ENCODE measurements at regions of chr4 and their contacts with region 1.

Region 1: DNA sequence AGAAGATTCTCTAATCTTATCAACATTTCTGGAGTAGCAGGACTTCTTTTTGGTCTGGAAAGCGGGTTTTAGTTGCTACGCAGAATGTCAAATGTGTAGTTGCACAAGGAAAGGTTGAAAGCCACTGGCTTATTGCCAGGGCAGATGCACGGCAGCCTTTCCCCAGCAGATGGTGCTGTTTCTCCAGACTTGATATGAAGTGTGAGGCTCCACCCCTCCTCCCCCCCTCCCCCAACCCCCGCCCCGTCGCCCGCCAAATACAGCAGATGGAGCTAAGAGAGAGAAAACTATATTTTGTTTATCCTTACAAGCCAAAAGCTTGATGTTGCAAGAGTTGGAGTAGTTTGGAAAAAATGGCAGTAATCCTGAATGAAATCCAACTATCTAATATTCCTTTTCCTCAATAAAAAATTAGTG is 32.0 kb downstream of the ENOPH1 start:
- DNase-seq: peak; percentile 82 to 88
- H3K4me3 ChIP-seq: no peak overlapping the region
- H3K4me3 Mint-ChIP-seq: no peak overlapping the region
- H3K27ac Mint-ChIP-seq: no peak overlapping the region
- H3K4me1 ChIP-seq: peaks cover 5% of the 10 kb centered on the region
- H3K4me1 Mint-ChIP-seq: no peaks in the 10 kb centered on the region
- H3K27me3 ChIP-seq: no peaks in the 10 kb centered on the region
- H3K27me3 Mint-ChIP-seq: no peaks in the 10 kb centered on the region
- CTCF ChIP-seq: peak; percentile 72 to 87

Region 2: GRCh38 chr4:82561745-82562515 is 99.5 kb after region 1 on chr4 and contains the start of gene TMEM150C:
- CTCF ChIA-PET with region 1: no interaction called
- POLR2A ChIA-PET with region 1: no interaction called
- intact Hi-C with region 1: loop called (anchors 2 kb)
- DNase-seq: peak; percentile 43 to 69
- H3K4me3 ChIP-seq: peak within 1 kb of the TSS; percentile 56
- H3K4me3 Mint-ChIP-seq: peak within 1 kb of the TSS; percentile 81
- H3K27ac Mint-ChIP-seq: peak within 1 kb of the TSS; percentile 48
- H3K4me1 ChIP-seq: no peaks in the 10 kb centered on the region
- H3K4me1 Mint-ChIP-seq: peaks cover 12% of the 10 kb centered on the region
- H3K27me3 ChIP-seq: no peaks in the 10 kb centered on the region
- H3K27me3 Mint-ChIP-seq: no peaks in the 10 kb centered on the region
- CTCF ChIP-seq: no peak
- total RNA-seq, gene TMEM150C: 5.0 and 5.7 TPM in 2 replicates

Region 3: DNA sequence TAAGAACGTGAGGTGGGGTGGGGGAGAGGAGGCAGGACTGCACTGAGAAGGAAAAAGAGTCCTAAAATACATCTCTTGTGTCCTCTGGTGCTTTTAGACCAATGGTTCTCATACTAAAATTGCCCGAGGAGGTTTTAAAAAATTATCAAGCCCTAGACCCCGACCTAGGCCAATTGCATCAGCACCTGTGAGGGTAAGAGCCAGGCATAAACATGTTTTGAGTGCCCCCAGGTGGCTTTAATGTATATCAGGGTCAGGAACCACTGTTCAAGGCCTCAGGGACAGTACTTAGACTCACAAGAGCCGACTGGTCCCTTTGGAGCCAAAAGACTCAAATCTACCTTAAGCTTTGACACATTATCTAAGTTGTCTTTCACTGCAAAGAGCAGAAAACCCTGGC is 136.9 kb after region 1 on chr4:
- CTCF ChIA-PET with region 1: interaction called, 5 read pairs
- POLR2A ChIA-PET with region 1: no interaction called
- intact Hi-C with region 1: loop called (anchors 1 kb)
- DNase-seq: peak; percentile 55 to 57
- H3K4me3 ChIP-seq: no peak overlapping the region
- H3K4me3 Mint-ChIP-seq: no peak overlapping the region
- H3K27ac Mint-ChIP-seq: no peak overlapping the region
- H3K4me1 ChIP-seq: no peaks in the 10 kb centered on the region
- H3K4me1 Mint-ChIP-seq: no peaks in the 10 kb centered on the region
- H3K27me3 ChIP-seq: no peaks in the 10 kb centered on the region
- H3K27me3 Mint-ChIP-seq: no peaks in the 10 kb centered on the region
- CTCF ChIP-seq: peak in 1 of 2 experiments; percentile 30

Region 4: GRCh38 chr4:82710202-82710929 is 247.9 kb after region 1 on chr4:
- CTCF ChIA-PET with region 1: interaction called, 4 read pairs
- POLR2A ChIA-PET with region 1: no interaction called
- intact Hi-C with region 1: loop called (anchors 5 kb)
- DNase-seq: no peak
- H3K4me3 ChIP-seq: no peak overlapping the region
- H3K4me3 Mint-ChIP-seq: no peak overlapping the region
- H3K27ac Mint-ChIP-seq: no peak overlapping the region
- H3K4me1 ChIP-seq: no peaks in the 10 kb centered on the region
- H3K4me1 Mint-ChIP-seq: no peaks in the 10 kb centered on the region
- H3K27me3 ChIP-seq: no peaks in the 10 kb centered on the region
- H3K27me3 Mint-ChIP-seq: no peaks in the 10 kb centered on the region
- CTCF ChIP-seq: no peak

Region 5: DNA sequence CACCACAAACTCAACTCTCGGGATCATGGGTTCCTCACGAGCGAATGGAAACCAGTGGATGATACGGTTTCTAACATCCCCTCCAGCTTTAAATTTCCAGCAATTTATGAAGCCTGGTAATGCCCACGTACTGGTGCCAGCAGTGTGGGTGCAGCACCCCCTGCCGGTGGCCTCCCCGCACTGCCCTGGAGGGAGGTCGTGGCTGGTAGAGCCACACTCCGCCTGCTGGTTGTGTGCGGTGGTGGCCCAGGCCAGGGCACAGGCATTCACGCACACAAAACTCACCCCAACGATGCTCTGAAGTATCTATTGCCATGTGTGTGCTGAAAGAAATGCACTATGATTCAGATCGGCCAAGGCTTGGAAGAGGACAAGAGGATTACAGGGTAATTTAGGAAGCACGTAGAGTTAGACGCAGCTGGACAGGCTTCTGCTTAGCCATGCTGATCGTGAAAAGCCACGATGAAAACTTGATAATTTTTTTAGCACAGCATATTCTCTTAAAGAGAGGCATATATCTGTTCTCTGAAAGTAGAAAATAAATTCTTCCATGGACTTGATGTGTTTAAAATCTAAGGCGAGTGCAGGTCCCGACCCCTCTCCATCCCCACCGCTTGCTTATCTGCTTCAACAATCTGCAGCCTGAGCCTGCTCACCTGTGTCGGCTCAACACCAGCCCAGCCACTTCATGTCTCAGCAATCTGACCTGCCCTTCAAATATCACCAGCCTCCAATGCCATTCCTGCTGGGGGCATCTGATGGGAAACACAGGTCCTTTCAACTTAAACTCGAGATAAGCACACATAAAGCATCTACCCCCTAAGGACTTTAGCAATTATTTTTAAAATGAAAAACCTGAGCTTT is 277.1 kb after region 1 on chr4:
- CTCF ChIA-PET with region 1: interaction called, 9 read pairs
- POLR2A ChIA-PET with region 1: no interaction called
- intact Hi-C with region 1: loop called (anchors 1 kb)
- DNase-seq: peak in 1 of 2 experiments; percentile 75
- H3K4me3 ChIP-seq: no peak overlapping the region
- H3K4me3 Mint-ChIP-seq: no peak overlapping the region
- H3K27ac Mint-ChIP-seq: no peak overlapping the region
- H3K4me1 ChIP-seq: no peaks in the 10 kb centered on the region
- H3K4me1 Mint-ChIP-seq: no peaks in the 10 kb centered on the region
- H3K27me3 ChIP-seq: no peaks in the 10 kb centered on the region
- H3K27me3 Mint-ChIP-seq: no peaks in the 10 kb centered on the region
- CTCF ChIP-seq: peak; percentile 71 to 80

Region 6: DNA sequence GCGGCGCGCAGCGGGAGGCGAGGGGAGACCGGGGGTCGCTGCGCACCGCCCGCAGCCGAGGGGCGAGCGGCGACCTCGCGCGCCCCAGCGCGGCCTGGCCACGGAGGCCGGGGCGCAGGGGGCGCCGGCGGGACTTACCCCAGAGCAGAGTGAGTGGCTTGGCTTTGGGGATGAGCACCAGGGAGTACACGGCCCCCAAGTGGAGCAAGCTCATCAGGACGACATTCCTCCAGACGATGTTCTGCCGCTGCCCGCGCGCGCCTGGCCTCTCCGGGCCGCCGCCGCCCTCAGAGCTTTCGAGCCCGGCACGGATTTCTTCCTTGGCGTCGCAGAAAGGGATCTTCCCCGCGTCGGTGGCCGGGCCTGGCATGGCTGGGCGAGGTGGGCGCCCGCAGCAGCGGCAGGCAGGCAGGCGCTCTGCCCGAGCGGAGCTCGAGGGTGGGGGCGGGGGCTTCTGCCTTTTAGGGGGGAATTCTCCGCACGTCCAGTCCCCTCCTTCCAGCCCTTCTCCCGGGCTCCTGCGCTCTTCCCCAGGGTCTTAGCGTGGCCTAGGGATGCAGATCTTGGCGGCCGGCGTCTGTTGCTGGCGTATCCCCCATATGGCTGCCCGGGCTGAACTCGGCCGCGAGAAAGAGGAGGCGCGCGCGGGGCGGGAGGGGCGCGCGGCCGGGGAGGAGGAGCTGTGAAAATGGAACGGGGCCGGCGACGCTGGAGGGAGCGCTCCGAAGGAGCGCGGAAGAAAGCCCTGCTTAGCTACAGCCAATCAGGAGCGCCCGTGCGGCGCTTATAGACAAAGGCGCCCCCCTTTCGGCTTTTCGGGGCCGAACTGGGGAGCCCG is 336.0 kb after region 1 on chr4 and contains the start of gene SCD5:
- CTCF ChIA-PET with region 1: interaction called, 3 read pairs
- POLR2A ChIA-PET with region 1: no interaction called
- intact Hi-C with region 1: loop called (anchors 5 kb)
- DNase-seq: peak; percentile 42 to 51
- H3K4me3 ChIP-seq: peak within 1 kb of the TSS; percentile 64
- H3K4me3 Mint-ChIP-seq: peak within 1 kb of the TSS; percentile 74
- H3K27ac Mint-ChIP-seq: no peak within 1 kb of the TSS
- H3K4me1 ChIP-seq: no peaks in the 10 kb centered on the region
- H3K4me1 Mint-ChIP-seq: no peaks in the 10 kb centered on the region
- H3K27me3 ChIP-seq: no peaks in the 10 kb centered on the region
- H3K27me3 Mint-ChIP-seq: peaks cover 5% of the 10 kb centered on the region
- CTCF ChIP-seq: no peak
- total RNA-seq, gene SCD5: 2.7 and 3.4 TPM in 2 replicates

Region 7: GRCh38 chr4:82842593-82842992 is 380.2 kb after region 1 on chr4:
- CTCF ChIA-PET with region 1: no interaction called
- POLR2A ChIA-PET with region 1: no interaction called
- intact Hi-C with region 1: no loop called
- DNase-seq: peak in 1 of 2 experiments; percentile 13
- H3K4me3 ChIP-seq: no peak overlapping the region
- H3K4me3 Mint-ChIP-seq: no peak overlapping the region
- H3K27ac Mint-ChIP-seq: no peak overlapping the region
- H3K4me1 ChIP-seq: no peaks in the 10 kb centered on the region
- H3K4me1 Mint-ChIP-seq: no peaks in the 10 kb centered on the region
- H3K27me3 ChIP-seq: no peaks in the 10 kb centered on the region
- H3K27me3 Mint-ChIP-seq: no peaks in the 10 kb centered on the region
- CTCF ChIP-seq: peak; percentile 28 to 43

Measured in Caco-2 (cell line).